GM13976 (cell line): ENCODE measurements at regions of chr21 and their contacts with region 1.

Region 1: GRCh38 chr21:16082038-16082816 is 352.4 kb downstream of the USP25 start:
- DNase-seq: no peak
- CTCF ChIP-seq: no peak

Region 2: GRCh38 chr21:16330082-16330907 is 248.1 kb after region 1 on chr21:
- in situ Hi-C with region 1: loop called (anchors 25 kb)
- DNase-seq: peak; percentile 12
- CTCF ChIP-seq: peak; percentile 53